SK-N-SH (cell line): ENCODE measurements at regions of chr1 and their contacts with region 1.

Region 1: GRCh38 chr1:160291248-160292220 is 6.6 kb upstream of the PEX19 start:
- DNase-seq: peak; percentile 62
- H3K4me3 ChIP-seq: no peak overlapping the region
- H3K27ac ChIP-seq: no peak overlapping the region
- H3K4me1 ChIP-seq: no peaks in the 10 kb centered on the region
- H3K27me3 ChIP-seq: no peaks in the 10 kb centered on the region
- CTCF ChIP-seq: peak; percentile 86
- EP300 ChIP-seq: no peak
- RAD21 ChIP-seq: peak; percentile 61

Region 2: DNA sequence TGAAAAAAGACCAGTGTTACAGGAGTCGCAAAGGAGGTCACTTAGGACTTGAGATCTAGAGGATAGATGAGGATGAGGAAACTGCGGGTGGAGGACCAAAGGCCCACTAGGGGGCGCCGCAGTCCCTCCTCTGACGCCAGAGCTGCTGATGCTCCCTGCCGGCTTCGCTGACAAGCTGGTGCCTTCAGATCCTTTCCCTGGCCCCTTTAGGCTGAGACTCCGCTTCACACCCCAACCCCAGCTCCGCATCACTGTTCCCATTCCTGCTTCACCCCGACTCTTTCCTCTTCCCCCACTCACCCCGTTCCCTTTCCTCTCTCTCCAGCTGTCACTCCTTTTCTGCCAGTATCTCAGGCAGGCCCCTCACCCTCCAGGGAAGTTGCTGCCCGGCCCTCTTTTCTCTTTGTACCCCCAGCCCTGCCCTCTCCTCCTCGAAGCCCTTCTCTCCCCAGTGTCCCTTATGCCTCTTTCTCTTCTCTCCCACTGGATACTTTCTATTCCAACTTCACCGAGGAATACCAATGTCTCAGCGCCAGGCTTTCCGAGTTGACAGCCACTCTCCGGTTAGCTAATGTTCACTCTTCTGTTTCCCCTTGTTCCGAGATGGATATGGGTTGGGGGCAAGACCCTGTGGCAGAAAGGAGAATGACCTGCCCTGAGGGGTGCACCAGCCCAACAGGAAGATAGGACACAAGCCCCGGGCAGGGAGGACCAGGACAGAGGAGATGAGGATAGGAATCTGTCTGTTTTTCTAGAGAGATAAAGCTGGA is 205.7 kb before region 1 on chr1:
- CTCF ChIA-PET with region 1: interaction called, 25 read pairs
- POLR2A ChIA-PET with region 1: no interaction called
- DNase-seq: peak; percentile 91
- H3K4me3 ChIP-seq: no peak overlapping the region
- H3K27ac ChIP-seq: no peak overlapping the region
- H3K4me1 ChIP-seq: peaks cover 0 to 13% of the 10 kb centered on the region in 2 experiments; a peak in 1 of 4 replicates
- H3K27me3 ChIP-seq: peaks cover 22% of the 10 kb centered on the region; the same call in 1 of the 2 replicates
- CTCF ChIP-seq: peak; percentile 78
- EP300 ChIP-seq: no peak
- RAD21 ChIP-seq: peak; percentile 76

Region 3: DNA sequence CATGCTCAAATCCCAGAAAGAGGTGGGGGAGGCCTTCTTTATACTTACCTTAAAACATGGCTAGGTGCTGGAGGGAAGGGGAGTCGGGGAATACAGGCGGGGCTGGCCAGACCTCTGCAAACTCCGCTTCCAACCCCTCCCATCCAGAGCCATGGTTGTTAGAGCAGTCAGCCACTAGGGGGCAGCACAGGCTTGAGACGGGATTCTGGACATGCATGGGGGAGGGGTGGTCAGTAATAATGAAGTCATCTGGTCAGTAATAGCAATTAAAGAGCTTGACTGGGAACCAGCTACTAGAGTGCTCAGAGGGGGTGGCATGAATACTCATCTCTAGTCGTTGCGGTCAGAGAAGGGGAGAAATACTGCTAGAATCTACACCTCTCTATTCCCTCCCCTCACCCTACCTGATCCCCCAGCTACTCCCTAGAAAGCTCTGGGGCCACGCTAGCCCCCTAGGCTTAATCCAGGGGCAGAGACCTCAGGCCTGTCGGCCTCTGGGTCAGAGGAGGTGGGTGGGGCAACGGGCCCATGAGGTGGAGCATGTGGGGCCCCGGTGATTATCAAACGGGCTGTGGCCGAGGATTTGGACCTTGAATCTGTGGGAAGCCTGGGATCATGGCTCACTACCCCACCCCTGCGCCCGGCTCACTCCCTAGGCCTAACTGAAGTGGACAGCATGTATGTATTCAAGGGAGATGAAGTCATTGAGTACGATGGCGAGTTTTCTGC is 98.3 kb before region 1 on chr1:
- CTCF ChIA-PET with region 1: interaction called, 76 read pairs
- POLR2A ChIA-PET with region 1: no interaction called
- DNase-seq: peak; percentile 80
- H3K4me3 ChIP-seq: peak overlapping the region in 1 of 2 experiments; percentile 25; a peak in 1 of 4 replicates
- H3K27ac ChIP-seq: peak overlapping the region in 1 of 2 experiments; percentile 11; a peak in 1 of 4 replicates
- H3K4me1 ChIP-seq: peaks cover 3 to 5% of the 10 kb centered on the region in 2 experiments; a peak in 2 of 4 replicates
- H3K27me3 ChIP-seq: no peaks in the 10 kb centered on the region
- CTCF ChIP-seq: peak; percentile 96
- EP300 ChIP-seq: peak in 1 of 2 experiments; percentile 22; a peak in 1 of 4 replicates
- RAD21 ChIP-seq: peak; percentile 98

Region 4: GRCh38 chr1:160251687-160252526 is 39.6 kb before region 1 on chr1:
- CTCF ChIA-PET with region 1: interaction called, 28 read pairs
- POLR2A ChIA-PET with region 1: no interaction called
- DNase-seq: peak; percentile 68
- H3K4me3 ChIP-seq: no peak overlapping the region
- H3K27ac ChIP-seq: no peak overlapping the region
- H3K4me1 ChIP-seq: peaks cover 0 to 17% of the 10 kb centered on the region in 2 experiments; a peak in 2 of 4 replicates
- H3K27me3 ChIP-seq: no peaks in the 10 kb centered on the region
- CTCF ChIP-seq: peak; percentile 84
- EP300 ChIP-seq: no peak
- RAD21 ChIP-seq: peak; percentile 92

Region 5: DNA sequence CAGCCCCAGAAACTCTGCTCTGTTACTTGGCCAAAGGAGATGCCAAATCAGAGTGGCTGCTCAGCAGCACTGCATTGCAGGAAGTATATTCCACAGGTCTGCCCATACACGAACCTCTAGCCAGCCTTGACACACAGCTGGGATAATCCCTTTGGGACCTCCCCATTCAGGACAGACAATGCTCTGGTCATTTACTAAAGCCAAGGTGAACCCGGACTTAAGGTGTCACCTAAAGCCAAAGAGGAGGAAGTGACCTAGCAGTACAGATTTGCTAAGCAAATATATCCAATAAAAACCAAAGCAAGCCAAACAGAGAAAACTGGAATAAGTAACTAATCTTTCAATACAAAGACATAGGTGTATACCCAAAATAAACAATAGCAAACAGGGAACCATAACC is 23.8 kb after region 1 on chr1:
- CTCF ChIA-PET with region 1: interaction called, 63 read pairs
- POLR2A ChIA-PET with region 1: no interaction called
- DNase-seq: no peak
- H3K4me3 ChIP-seq: no peak overlapping the region
- H3K27ac ChIP-seq: no peak overlapping the region
- H3K4me1 ChIP-seq: no peaks in the 10 kb centered on the region
- H3K27me3 ChIP-seq: no peaks in the 10 kb centered on the region
- CTCF ChIP-seq: no peak
- EP300 ChIP-seq: no peak
- RAD21 ChIP-seq: no peak

Region 6: GRCh38 chr1:160354388-160354985 is 63.0 kb after region 1 on chr1:
- CTCF ChIA-PET with region 1: interaction called, 10 read pairs
- POLR2A ChIA-PET with region 1: no interaction called
- DNase-seq: peak; percentile 53
- H3K4me3 ChIP-seq: peak overlapping the region in 1 of 2 experiments; percentile 28; a peak in 1 of 4 replicates
- H3K27ac ChIP-seq: no peak overlapping the region
- H3K4me1 ChIP-seq: no peaks in the 10 kb centered on the region
- H3K27me3 ChIP-seq: no peaks in the 10 kb centered on the region
- CTCF ChIP-seq: peak; percentile 70
- EP300 ChIP-seq: no peak
- RAD21 ChIP-seq: peak; percentile 44

Region 7: GRCh38 chr1:160437432-160438316 is 146.1 kb after region 1 on chr1:
- CTCF ChIA-PET with region 1: no interaction called
- POLR2A ChIA-PET with region 1: no interaction called
- DNase-seq: no peak
- H3K4me3 ChIP-seq: 0 out of 4 replicates have a peak overlapping the region, but pooled peaks of 1 of the 2 experiments have one; percentile 11
- H3K27ac ChIP-seq: no peak overlapping the region
- H3K4me1 ChIP-seq: no peaks in the 10 kb centered on the region
- H3K27me3 ChIP-seq: 0 out of 2 replicates have a peak, but pooled peaks cover 9% of the 10 kb centered on the region
- CTCF ChIP-seq: no peak
- EP300 ChIP-seq: no peak
- RAD21 ChIP-seq: no peak

Region 8: DNA sequence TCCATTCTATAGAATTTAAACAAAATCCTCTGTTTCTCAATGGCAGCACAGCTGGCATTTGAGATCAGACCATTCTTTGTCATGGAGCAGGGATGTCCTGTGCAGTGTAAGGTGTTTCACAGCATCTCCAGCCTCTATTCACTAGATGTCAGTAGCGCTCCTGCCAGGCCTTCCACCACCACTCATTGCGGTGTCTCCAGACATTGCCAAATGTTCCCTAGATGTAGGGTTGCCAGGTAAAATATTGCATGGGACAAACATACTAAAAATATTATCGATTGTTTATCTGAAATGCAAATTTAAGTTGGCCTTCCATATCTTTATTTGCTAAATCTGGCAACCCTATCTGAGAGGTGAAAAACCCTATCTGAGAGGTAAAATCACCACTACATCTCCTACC is 651.4 kb after region 1 on chr1:
- CTCF ChIA-PET with region 1: no interaction called
- POLR2A ChIA-PET with region 1: no interaction called
- DNase-seq: no peak
- H3K4me3 ChIP-seq: no peak overlapping the region
- H3K27ac ChIP-seq: no peak overlapping the region
- H3K4me1 ChIP-seq: no peaks in the 10 kb centered on the region
- H3K27me3 ChIP-seq: peaks cover 36% of the 10 kb centered on the region
- CTCF ChIP-seq: no peak
- EP300 ChIP-seq: no peak
- RAD21 ChIP-seq: peak; percentile 19; the same call in 1 of the 2 replicates